CD4-positive, alpha-beta memory T cell (primary cell): ENCODE measurements at regions of chr14 and their contacts with region 1.

Region 1: DNA sequence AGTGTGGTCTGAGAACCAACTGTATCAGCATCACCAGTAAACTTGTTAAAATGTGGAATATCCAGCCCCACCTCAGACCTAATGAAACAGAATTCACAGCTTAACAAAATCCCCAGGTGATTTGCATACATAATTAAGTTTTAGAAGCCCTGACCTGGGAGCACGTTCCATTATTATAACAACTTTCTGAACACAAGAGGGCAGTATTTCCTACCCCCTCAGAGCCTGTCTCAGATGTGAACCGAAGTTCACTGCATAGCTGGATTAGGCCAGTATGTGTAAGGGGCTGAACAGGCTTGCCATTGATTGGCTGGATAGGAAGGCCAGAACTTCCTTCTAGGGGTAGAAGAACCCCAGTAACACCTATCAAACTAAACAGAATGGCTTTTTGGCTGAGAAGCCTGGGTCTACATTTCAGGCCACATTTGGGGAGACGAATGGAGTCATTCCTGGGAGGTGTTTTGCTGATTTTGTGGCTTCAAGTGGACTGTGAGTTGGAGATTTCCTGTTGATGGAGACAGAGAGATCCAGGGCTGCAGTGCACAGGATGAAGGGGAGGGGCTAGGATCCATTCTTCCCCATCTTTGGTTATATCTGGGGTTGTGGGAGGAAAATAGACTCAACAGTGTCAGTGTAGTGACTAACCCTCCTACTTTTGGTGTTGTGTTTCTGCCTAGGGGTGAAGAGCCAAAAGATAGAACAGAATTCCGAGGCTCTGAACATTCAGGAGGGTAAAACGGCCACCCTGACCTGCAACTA is 94.7 kb upstream of the OR4E1 start:
- DNase-seq: peak; percentile 33 to 55 (median 45)
- H3K4me3 ChIP-seq: no peak overlapping the region
- H3K4me3 Mint-ChIP-seq: peak overlapping the region; percentile 41 to 76 (median 68)
- H3K27ac ChIP-seq: peak overlapping the region; percentile 6
- H3K27ac Mint-ChIP-seq: peak overlapping the region in 5 of 7 donors; percentile 17 to 77 (median 63)
- H3K4me1 ChIP-seq: no peaks in the 10 kb centered on the region
- H3K4me1 Mint-ChIP-seq: peaks cover 0 to 4% (median 0%) of the 10 kb centered on the region in 4 donors
- H3K27me3 ChIP-seq: no peaks in the 10 kb centered on the region
- H3K27me3 Mint-ChIP-seq: peaks cover 0 to 2% of the 10 kb centered on the region in 2 donors

Region 2: GRCh38 chr14:21343035-21343794 is 425.1 kb before region 1 on chr14:
- CTCF ChIA-PET with region 1: no interaction called
- POLR2A ChIA-PET with region 1: no interaction called
- intact Hi-C with region 1: no loop called
- DNase-seq: no peak
- H3K4me3 ChIP-seq: no peak overlapping the region
- H3K4me3 Mint-ChIP-seq: no peak overlapping the region
- H3K27ac ChIP-seq: no peak overlapping the region
- H3K27ac Mint-ChIP-seq: no peak overlapping the region
- H3K4me1 ChIP-seq: no peaks in the 10 kb centered on the region
- H3K4me1 Mint-ChIP-seq: peaks cover 0 to 6% (median 3%) of the 10 kb centered on the region in 4 donors
- H3K27me3 ChIP-seq: no peaks in the 10 kb centered on the region
- H3K27me3 Mint-ChIP-seq: peaks cover 0 to 5% of the 10 kb centered on the region in 2 donors

Region 3: GRCh38 chr14:21748869-21749303 is 19.4 kb before region 1 on chr14:
- CTCF ChIA-PET with region 1: interaction called, 5 read pairs
- POLR2A ChIA-PET with region 1: interaction called, 4 read pairs
- intact Hi-C with region 1: loop called (anchors 2 kb)
- DNase-seq: peak; percentile 48 to 54 (median 50)
- H3K4me3 ChIP-seq: no peak overlapping the region
- H3K4me3 Mint-ChIP-seq: peak overlapping the region; percentile 18 to 78 (median 62)
- H3K27ac ChIP-seq: no peak overlapping the region
- H3K27ac Mint-ChIP-seq: peak overlapping the region in 6 of 7 donors; percentile 26 to 82 (median 50)
- H3K4me1 ChIP-seq: no peaks in the 10 kb centered on the region
- H3K4me1 Mint-ChIP-seq: peaks cover 6 to 9% (median 8%) of the 10 kb centered on the region in 4 donors
- H3K27me3 ChIP-seq: no peaks in the 10 kb centered on the region
- H3K27me3 Mint-ChIP-seq: peaks cover 12 to 19% of the 10 kb centered on the region in 2 donors

Region 4: DNA sequence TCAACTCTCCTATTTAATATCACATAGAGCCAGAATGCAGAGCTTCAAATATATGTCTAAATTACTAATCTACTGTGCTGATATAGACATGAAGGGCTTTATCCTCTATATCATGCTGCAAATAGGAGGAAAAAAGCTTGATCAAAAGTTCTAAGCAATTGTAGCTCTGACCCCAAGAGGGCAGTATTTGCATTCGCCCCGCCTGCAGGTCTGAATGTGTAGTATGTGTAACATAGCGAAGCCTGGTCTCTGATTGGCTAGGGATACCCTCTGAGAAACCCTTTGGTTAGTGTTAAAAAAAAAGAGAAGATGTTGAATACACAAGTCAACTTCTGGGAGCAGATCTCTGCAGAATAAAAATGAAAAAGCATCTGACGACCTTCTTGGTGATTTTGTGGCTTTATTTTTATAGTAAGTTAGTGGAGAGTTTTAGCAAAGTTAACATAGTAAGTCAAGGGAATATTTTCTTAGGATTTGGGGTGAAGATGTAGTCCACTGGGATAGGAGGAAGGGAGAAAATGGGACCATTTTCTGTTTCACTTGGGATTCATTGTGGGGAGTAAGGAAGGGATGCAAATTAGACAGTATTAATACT is 57.0 kb after region 1 on chr14:
- CTCF ChIA-PET with region 1: no interaction called
- POLR2A ChIA-PET with region 1: no interaction called
- intact Hi-C with region 1: loop called (anchors 5 kb)
- DNase-seq: peak; percentile 36 to 57 (median 51)
- H3K4me3 ChIP-seq: no peak overlapping the region
- H3K4me3 Mint-ChIP-seq: peak overlapping the region; percentile 11 to 65 (median 50)
- H3K27ac ChIP-seq: no peak overlapping the region
- H3K27ac Mint-ChIP-seq: peak overlapping the region in 2 of 7 donors; percentile 12 to 20
- H3K4me1 ChIP-seq: no peaks in the 10 kb centered on the region
- H3K4me1 Mint-ChIP-seq: peaks cover 0 to 6% (median 3%) of the 10 kb centered on the region in 4 donors
- H3K27me3 ChIP-seq: no peaks in the 10 kb centered on the region
- H3K27me3 Mint-ChIP-seq: peaks cover 32 to 34% of the 10 kb centered on the region in 2 donors